ENCODE measurements at regions of chr22 and their contacts with region 1.

Region 1: GRCh38 chr22:45268958-45269844 is 15.5 kb upstream of the UPK3A start:
- DNase-seq: peak; percentile 92
- H3K4me3 ChIP-seq: peak overlapping the region; percentile 39 to 61 (median 56)
- H3K27ac ChIP-seq: peak overlapping the region; percentile 46 to 66 (median 60)
- H3K4me1 ChIP-seq: peaks cover 0 to 30% (median 26%) of the 10 kb centered on the region in 4 donors
- H3K27me3 ChIP-seq: no peaks in the 10 kb centered on the region
- CTCF ChIP-seq: peak; percentile 67 to 86 (median 80)
- EP300 ChIP-seq: no peak
- POLR2A ChIP-seq: peak in 1 of 2 donors; percentile 11

Region 2: DNA sequence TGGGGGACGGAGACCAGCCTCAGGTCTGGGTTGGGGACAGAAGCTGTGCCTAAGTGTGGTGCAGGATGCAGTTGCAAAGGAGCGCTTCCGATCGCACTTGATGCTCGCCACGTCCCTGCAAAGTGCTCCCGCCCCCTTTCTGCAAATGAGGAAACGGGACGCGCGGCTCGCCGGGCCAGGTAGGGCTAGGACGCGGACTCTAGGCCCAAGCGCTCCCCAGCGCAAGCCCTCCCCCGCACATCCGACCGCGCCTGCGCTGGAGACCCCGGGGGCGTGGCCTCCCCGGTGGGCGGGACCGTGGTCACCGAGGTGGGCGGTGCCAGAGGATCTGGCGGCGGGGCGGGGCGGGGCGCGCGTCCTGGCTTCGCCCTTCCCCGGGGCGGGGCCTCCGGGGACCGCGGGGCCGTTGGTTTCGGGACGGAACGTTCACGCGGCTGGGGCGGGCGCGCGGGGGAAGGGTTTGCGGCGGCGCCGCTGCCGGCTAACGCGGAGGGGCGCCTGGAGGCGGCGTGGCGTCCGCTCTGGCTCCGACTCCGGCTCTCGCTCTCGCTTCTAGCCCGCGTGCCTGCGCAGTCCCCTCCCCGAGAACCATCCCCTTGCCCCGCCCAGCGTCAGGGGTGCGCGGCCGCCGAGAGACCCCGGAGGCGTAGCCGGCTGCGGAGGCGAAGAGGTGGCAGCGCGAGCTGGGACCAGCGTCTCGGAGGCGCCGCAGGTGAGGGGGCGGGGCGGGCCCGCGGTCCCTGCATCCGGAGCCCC is 40.4 kb after region 1 on chr22 and contains the start of gene FAM118A:
- intact Hi-C with region 1: loop called (anchors 5 kb)
- DNase-seq: peak; percentile 96
- H3K4me3 ChIP-seq: peak within 1 kb of the TSS; percentile 84 to 97 (median 95)
- H3K27ac ChIP-seq: peak within 1 kb of the TSS; percentile 83 to 90 (median 86)
- H3K4me1 ChIP-seq: peaks cover 0 to 20% (median 20%) of the 10 kb centered on the region in 4 donors
- H3K27me3 ChIP-seq: no peaks in the 10 kb centered on the region
- CTCF ChIP-seq: no peak
- EP300 ChIP-seq: no peak
- POLR2A ChIP-seq: peak; percentile 50 to 54
- total RNA-seq, gene FAM118A: 12.8 to 126 (median 38.8) TPM

Region 3: DNA sequence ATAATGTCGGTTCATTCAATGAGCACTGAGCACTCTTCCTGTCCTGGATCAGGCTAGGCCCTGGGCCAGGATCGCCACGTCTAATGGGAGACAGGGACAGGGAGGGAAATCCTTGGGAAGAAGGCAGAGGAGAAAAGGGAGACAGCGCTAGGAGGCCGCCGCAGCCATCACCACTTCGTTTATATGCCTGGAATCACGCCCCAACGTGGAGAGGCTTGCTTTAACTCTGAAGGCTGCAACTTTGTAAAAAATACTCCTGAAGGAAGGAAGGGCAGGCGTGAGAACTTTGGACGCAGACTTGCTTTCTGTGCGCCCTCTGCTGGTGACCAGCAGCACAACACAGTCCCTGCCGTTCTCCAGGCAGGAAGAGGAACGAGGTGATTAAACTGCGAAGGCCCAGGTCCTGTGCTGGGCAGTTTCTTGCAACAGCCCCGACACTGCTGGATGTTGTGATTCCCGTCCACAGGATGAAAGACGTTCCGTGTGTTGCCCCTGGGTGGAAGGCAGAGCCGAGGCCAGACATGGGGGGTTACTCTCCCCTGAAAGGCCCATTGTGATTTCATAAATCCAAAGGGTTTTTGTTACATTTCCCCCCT is 166.4 kb after region 1 on chr22:
- intact Hi-C with region 1: loop called (anchors 1 kb)
- DNase-seq: peak; percentile 95
- H3K4me3 ChIP-seq: peak overlapping the region in 1 of 4 donors; percentile 22
- H3K27ac ChIP-seq: peak overlapping the region; percentile 62 to 76 (median 66)
- H3K4me1 ChIP-seq: peaks cover 0 to 7% (median 5%) of the 10 kb centered on the region in 4 donors
- H3K27me3 ChIP-seq: no peaks in the 10 kb centered on the region
- CTCF ChIP-seq: peak; percentile 92 to 99 (median 97)
- EP300 ChIP-seq: no peak
- POLR2A ChIP-seq: no peak